Activated naive CD4-positive, alpha-beta T cell treated with anti-CD3 and anti-CD28 coated beads for 36 hours (primary cell): ENCODE measurements at regions of chr4 and their contacts with region 1.

Region 1: DNA sequence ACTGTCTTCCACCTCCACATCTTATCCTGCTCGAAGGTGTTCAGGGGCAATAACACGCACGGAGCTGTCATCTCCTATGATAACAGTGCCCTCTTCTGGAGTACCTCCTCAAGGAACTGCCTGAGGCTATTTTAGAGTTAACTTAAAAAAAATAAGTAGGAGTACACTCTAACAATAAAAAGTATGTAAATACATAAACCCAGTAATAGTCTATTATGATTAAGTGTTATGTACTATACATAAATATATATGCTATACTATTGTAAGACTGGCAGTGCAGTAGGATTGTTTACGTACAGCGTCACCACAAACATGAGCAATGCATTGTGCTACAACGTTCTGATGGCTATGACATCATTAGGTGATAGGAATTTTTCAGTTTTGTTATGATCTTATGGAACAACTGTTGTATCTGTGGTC is 34.5 kb upstream of the TLR2 start:
- DNase-seq: peak; percentile 44
- H3K4me3 Mint-ChIP-seq: no peak overlapping the region
- H3K27ac Mint-ChIP-seq: no peak overlapping the region
- H3K4me1 Mint-ChIP-seq: peaks cover 32% of the 10 kb centered on the region
- H3K27me3 Mint-ChIP-seq: no peaks in the 10 kb centered on the region

Region 2: GRCh38 chr4:153684182-153684970 is 34.8 kb after region 1 on chr4 and contains the start of gene TLR2:
- CTCF ChIA-PET with region 1: interaction called, 3 read pairs
- intact Hi-C with region 1: loop called (anchors 1 kb)
- DNase-seq: peak; percentile 83
- H3K4me3 Mint-ChIP-seq: peak within 1 kb of the TSS; percentile 78
- H3K27ac Mint-ChIP-seq: peak within 1 kb of the TSS; percentile 18
- H3K4me1 Mint-ChIP-seq: peaks cover 13% of the 10 kb centered on the region
- H3K27me3 Mint-ChIP-seq: peaks cover 14% of the 10 kb centered on the region
- total RNA-seq, gene TLR2: 1.5 to 2.6 TPM